SK-N-SH (cell line): ENCODE measurements at regions of chr1 and their contacts with region 1.

Region 1: DNA sequence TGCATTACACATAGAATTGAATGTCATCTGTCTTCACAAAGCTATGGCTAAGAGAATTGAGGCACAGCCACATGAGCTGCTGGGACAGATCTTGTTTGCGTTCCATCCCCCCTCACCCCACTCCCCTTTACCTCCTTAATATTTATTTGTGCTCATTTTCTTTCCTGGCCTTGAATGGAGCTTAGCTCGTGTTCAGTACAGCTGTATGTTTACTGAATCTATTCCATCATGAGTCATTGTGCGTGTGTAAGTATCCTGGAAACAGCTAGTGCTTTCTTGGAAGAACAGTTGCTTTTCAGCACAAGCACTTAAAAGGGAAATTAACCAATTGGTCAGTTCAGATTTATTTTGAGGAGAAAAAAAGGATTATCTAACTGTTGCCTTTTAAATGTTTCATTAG is 14.7 kb downstream of the PROX1 start:
- DNase-seq: no peak
- H3K4me3 ChIP-seq: no peak overlapping the region
- H3K27ac ChIP-seq: peak overlapping the region in 1 of 2 experiments; percentile 98; a peak in 2 of 4 replicates
- H3K4me1 ChIP-seq: peaks cover 0 to 52% of the 10 kb centered on the region in 2 experiments; a peak in 2 of 4 replicates
- H3K27me3 ChIP-seq: no peaks in the 10 kb centered on the region
- CTCF ChIP-seq: no peak
- EP300 ChIP-seq: no peak
- RAD21 ChIP-seq: no peak

Region 2: DNA sequence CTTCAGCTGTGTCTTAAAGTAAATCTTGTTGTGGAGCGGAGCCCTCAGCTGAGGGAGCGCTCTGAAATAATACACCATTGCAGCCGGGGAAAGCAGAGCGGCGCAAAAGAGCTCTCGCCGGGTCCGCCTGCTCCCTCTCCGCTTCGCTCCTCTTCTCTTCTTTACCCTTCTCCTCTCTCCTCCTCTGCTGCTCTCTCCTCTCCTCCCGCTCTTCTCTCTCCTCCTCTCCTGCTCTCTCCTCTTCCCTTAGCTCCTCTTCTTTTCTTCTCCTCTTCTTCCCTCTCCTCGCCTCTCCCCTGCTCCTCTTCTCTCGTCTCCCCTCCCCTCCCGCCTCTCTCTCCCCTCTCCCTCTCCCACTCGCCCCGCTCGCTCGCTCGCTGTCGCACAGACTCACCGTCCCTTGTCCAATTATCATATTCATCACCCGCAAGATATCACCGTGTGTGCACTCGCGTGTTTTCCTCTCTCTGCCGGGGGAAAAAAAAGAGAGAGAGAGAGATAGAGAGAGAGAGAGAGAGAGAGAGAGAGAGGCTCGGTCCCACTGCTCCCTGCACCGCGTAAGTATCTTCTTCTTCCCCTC is 14.5 kb before region 1 on chr1 and contains the start of gene PROX1:
- CTCF ChIA-PET with region 1: interaction called, 5 read pairs
- POLR2A ChIA-PET with region 1: interaction called, 21 read pairs
- DNase-seq: peak; percentile 67
- H3K4me3 ChIP-seq: peak within 1 kb of the TSS; percentile 67 to 75
- H3K27ac ChIP-seq: peak within 1 kb of the TSS; percentile 50 to 63
- H3K4me1 ChIP-seq: peaks cover 0 to 13% of the 10 kb centered on the region in 2 experiments; a peak in 3 of 4 replicates
- H3K27me3 ChIP-seq: peaks cover 25% of the 10 kb centered on the region
- CTCF ChIP-seq: no peak
- EP300 ChIP-seq: no peak
- RAD21 ChIP-seq: 0 out of 2 replicates have a peak, but pooled peaks have one; percentile 18
- polyA plus RNA-seq, gene PROX1: 0.25 and 0.45 TPM in 2 replicates